Breast epithelium (tissue), 4 donors: ENCODE measurements at regions of chr20 and their contacts with region 1.

Region 1: DNA sequence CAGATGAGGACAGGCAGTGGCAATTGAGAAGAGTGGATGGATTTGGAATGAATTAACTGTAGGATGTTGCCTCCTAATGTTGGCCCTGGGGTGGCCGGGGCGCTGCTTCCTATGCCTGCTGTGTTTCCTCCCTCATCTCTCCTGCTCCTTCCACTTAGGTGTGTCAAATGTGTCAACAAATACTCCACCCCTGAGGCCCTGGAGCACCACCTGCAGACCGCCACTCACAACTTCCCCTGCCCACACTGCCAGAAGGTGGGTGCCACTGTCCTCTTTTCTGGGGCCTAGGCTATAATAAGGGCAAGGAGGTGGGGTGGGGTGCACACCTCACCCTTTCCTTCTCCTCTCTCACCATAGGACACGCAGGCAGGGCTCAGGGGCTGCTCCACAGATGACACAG is 30.0 kb upstream of the CHMP4B start:
- DNase-seq: no peak
- H3K4me3 ChIP-seq: no peak overlapping the region
- H3K27ac ChIP-seq: no peak overlapping the region
- H3K4me1 ChIP-seq: no peaks in the 10 kb centered on the region
- H3K27me3 ChIP-seq: no peaks in the 10 kb centered on the region
- CTCF ChIP-seq: no peak
- POLR2A ChIP-seq: no peak

Region 2: DNA sequence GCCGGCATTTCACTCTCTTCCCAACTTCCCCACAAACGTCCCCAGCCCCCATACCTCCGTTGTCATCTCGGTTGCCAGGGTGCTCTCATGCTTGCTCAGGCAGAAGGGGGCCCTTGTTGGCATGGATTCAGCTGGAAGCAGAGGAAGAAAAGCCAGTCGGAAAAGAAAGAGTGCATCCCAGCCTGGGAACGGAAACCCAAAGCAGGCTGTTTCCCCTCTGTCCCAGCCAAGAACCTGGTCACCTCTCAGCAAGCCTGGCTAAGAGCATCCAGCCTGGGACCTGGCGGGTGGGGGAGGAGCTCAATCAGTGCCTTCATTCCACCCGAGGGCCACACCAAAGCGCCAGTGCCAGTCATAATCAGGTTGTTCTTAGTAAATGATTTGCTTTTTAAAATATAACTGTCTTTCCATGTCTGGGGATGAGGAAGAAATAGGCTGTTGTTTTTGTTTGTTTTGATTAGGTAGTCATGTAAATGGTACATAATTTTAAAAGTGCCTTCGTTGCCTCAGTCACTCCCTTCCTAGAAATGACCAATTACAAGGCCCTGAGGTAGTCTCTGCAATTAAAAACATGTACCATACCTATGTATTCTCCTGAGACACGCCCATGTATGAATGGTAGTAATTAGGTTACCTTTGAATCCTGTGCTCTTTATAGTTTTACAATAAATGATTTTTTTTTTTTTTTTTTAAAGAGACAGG is 51.1 kb after region 1 on chr20:
- intact Hi-C with region 1: loop called (anchors 5 kb)
- DNase-seq: no peak
- H3K4me3 ChIP-seq: peak overlapping the region in 1 of 3 donors; percentile 16
- H3K27ac ChIP-seq: peak overlapping the region; percentile 28 to 44
- H3K4me1 ChIP-seq: peaks cover 0 to 7% of the 10 kb centered on the region in 2 donors
- H3K27me3 ChIP-seq: no peaks in the 10 kb centered on the region
- CTCF ChIP-seq: no peak
- POLR2A ChIP-seq: no peak

Region 3: DNA sequence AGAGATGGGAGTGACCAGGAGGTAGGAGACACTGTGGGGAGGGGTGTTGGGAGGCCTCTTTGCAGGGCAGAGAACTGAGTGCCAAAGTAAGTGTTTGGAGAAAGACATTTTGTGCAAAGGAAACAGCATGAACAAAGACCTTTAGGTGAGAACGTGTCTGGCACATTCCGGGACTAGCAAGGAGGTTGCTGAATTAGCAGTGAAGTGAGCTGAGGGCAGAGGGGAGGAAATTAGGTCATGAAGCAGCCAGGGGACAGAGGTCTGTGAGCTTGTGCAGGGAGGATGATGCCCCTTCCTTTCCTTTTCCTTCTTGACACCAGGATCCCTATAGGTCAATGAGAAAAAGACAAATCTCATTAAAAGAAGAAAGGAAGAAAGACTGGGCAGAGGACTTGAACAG is 543.4 kb after region 1 on chr20:
- intact Hi-C with region 1: no loop called
- DNase-seq: no peak
- H3K4me3 ChIP-seq: no peak overlapping the region
- H3K27ac ChIP-seq: no peak overlapping the region
- H3K4me1 ChIP-seq: no peaks in the 10 kb centered on the region
- H3K27me3 ChIP-seq: no peaks in the 10 kb centered on the region
- CTCF ChIP-seq: no peak
- POLR2A ChIP-seq: no peak